Breast epithelium (tissue), 4 donors: ENCODE measurements at regions of chr6 and their contacts with region 1.

Region 1: GRCh38 chr6:123986938-123987337 is 183.3 kb downstream of the NKAIN2 start:
- DNase-seq: no peak
- H3K4me3 ChIP-seq: no peak overlapping the region
- H3K27ac ChIP-seq: no peak overlapping the region
- H3K4me1 ChIP-seq: no peaks in the 10 kb centered on the region
- H3K27me3 ChIP-seq: no peaks in the 10 kb centered on the region
- CTCF ChIP-seq: no peak
- POLR2A ChIP-seq: no peak

Region 2: GRCh38 chr6:124040655-124041054 is 53.7 kb after region 1 on chr6:
- intact Hi-C with region 1: loop called (anchors 2 kb)
- DNase-seq: no peak
- H3K4me3 ChIP-seq: no peak overlapping the region
- H3K27ac ChIP-seq: no peak overlapping the region
- H3K4me1 ChIP-seq: no peaks in the 10 kb centered on the region
- H3K27me3 ChIP-seq: no peaks in the 10 kb centered on the region
- CTCF ChIP-seq: no peak
- POLR2A ChIP-seq: no peak